CD4-positive, alpha-beta T cell (primary cell): ENCODE measurements at regions of chr12 and their contacts with region 1.

Region 1: DNA sequence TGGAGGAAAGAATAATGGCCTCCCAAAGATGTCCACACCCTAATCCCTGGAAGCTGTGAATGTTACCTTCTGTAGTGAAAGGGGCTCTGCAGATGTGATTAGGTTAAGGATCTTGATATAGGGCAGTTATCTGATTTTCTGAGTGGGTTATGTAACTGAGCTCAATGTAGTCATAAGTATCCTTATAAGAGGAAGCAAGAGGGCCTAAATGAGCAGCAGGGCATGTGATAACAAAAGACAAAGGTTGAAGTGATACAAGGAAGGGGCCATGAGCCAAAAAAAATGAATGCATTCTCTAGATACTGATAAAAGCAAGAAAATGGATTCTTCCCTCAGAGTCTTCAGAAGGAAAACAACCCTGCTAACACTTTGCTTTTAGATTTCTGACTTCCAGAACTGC is 78.8 kb downstream of the OSBPL8 start:
- DNase-seq: no peak
- ATAC-seq: no peak
- H3K4me3 ChIP-seq: no peak overlapping the region
- H3K4me3 Mint-ChIP-seq: no peak overlapping the region
- H3K27ac ChIP-seq: no peak overlapping the region
- H3K27ac Mint-ChIP-seq: peak overlapping the region; percentile 2
- H3K4me1 ChIP-seq: no peaks in the 10 kb centered on the region
- H3K4me1 Mint-ChIP-seq: peaks cover 44% of the 10 kb centered on the region
- H3K27me3 ChIP-seq: no peaks in the 10 kb centered on the region
- H3K27me3 Mint-ChIP-seq: no peaks in the 10 kb centered on the region
- CTCF ChIP-seq: no peak

Region 2: DNA sequence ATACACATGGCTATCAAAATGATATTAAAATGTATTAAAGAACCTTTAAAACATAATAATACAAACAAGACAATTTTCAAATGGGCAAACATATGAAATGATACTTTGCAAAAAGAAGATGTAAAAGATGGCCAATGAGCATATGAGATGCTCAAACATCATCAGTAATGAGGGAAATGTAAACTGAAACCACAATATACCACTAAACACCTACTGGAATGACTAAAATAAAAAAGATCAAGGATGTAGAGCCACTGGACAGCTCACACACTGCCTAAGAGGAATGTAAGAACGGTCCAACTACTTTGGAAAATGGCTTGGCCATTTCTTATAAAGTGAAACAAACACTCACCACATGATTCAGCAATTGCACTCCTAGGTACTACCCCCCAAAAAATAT is 35.3 kb before region 1 on chr12:
- CTCF ChIA-PET with region 1: no interaction called
- POLR2A ChIA-PET with region 1: no interaction called
- intact Hi-C with region 1: no loop called
- DNase-seq: no peak
- ATAC-seq: no peak
- H3K4me3 ChIP-seq: no peak overlapping the region
- H3K4me3 Mint-ChIP-seq: no peak overlapping the region
- H3K27ac ChIP-seq: no peak overlapping the region
- H3K27ac Mint-ChIP-seq: no peak overlapping the region
- H3K4me1 ChIP-seq: peaks cover 4% of the 10 kb centered on the region
- H3K4me1 Mint-ChIP-seq: peaks cover 52% of the 10 kb centered on the region
- H3K27me3 ChIP-seq: no peaks in the 10 kb centered on the region
- H3K27me3 Mint-ChIP-seq: no peaks in the 10 kb centered on the region
- CTCF ChIP-seq: no peak

Region 3: DNA sequence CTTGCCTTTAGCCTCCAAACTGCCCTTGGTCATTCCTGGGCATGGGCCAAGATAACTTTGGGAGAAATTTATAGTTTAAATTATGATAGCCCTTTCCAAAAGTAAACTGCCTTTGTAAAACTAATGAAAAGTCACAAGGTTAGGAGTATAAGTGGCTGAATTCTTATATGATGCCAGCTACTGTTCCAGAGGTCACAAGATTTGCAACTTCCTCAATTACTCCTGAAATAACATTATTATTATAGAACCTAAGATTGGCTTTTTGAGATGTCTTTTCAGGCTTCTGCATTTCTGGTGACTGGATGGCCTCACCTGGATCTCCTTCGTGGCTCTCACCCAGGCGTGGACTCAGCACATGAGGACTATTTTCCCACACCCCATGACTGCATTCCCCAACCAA is 23.8 kb after region 1 on chr12:
- CTCF ChIA-PET with region 1: no interaction called
- POLR2A ChIA-PET with region 1: no interaction called
- intact Hi-C with region 1: no loop called
- DNase-seq: no peak
- ATAC-seq: no peak
- H3K4me3 ChIP-seq: no peak overlapping the region
- H3K4me3 Mint-ChIP-seq: no peak overlapping the region
- H3K27ac ChIP-seq: no peak overlapping the region
- H3K27ac Mint-ChIP-seq: no peak overlapping the region
- H3K4me1 ChIP-seq: peaks cover 4% of the 10 kb centered on the region
- H3K4me1 Mint-ChIP-seq: peaks cover 64% of the 10 kb centered on the region
- H3K27me3 ChIP-seq: no peaks in the 10 kb centered on the region
- H3K27me3 Mint-ChIP-seq: no peaks in the 10 kb centered on the region
- CTCF ChIP-seq: no peak

Region 4: DNA sequence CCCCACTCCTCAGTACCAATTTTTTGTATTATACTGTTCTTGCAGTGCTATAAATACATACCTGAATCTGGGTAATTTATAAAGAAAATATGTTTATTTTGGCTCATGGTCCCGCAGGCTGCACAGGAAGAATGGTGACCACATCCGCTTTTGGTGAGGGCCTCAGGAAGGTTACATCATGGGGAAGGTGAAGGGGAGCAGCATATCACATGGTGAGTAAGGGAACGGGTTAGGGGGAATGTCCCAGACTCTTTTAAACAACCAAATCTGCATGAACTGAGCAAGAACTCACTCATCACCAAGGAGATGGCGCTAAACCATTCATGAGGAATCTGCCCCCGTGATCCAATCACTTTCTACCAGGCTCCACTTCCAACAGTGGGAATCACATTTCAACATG is 38.7 kb after region 1 on chr12:
- CTCF ChIA-PET with region 1: no interaction called
- POLR2A ChIA-PET with region 1: no interaction called
- intact Hi-C with region 1: loop called in 1 of 2 experiments (anchors 5 kb)
- DNase-seq: peak in 3 of 14 experiments; percentile 26 to 43 (median 31)
- ATAC-seq: peak; percentile 19
- H3K4me3 ChIP-seq: no peak overlapping the region
- H3K4me3 Mint-ChIP-seq: no peak overlapping the region
- H3K27ac ChIP-seq: no peak overlapping the region
- H3K27ac Mint-ChIP-seq: peak overlapping the region; percentile 55
- H3K4me1 ChIP-seq: peaks cover 8% of the 10 kb centered on the region
- H3K4me1 Mint-ChIP-seq: peaks cover 87% of the 10 kb centered on the region
- H3K27me3 ChIP-seq: no peaks in the 10 kb centered on the region
- H3K27me3 Mint-ChIP-seq: no peaks in the 10 kb centered on the region
- CTCF ChIP-seq: no peak

Region 5: GRCh38 chr12:76533331-76533730 is 52.5 kb after region 1 on chr12:
- CTCF ChIA-PET with region 1: no interaction called
- POLR2A ChIA-PET with region 1: no interaction called
- intact Hi-C with region 1: no loop called
- DNase-seq: no peak
- ATAC-seq: no peak
- H3K4me3 ChIP-seq: no peak overlapping the region
- H3K4me3 Mint-ChIP-seq: no peak overlapping the region
- H3K27ac ChIP-seq: no peak overlapping the region
- H3K27ac Mint-ChIP-seq: no peak overlapping the region
- H3K4me1 ChIP-seq: no peaks in the 10 kb centered on the region
- H3K4me1 Mint-ChIP-seq: peaks cover 75% of the 10 kb centered on the region
- H3K27me3 ChIP-seq: no peaks in the 10 kb centered on the region
- H3K27me3 Mint-ChIP-seq: no peaks in the 10 kb centered on the region
- CTCF ChIP-seq: no peak

Region 6: GRCh38 chr12:76848132-76848531 is 367.3 kb after region 1 on chr12:
- CTCF ChIA-PET with region 1: no interaction called
- POLR2A ChIA-PET with region 1: no interaction called
- intact Hi-C with region 1: no loop called
- DNase-seq: no peak
- ATAC-seq: no peak
- H3K4me3 ChIP-seq: no peak overlapping the region
- H3K4me3 Mint-ChIP-seq: no peak overlapping the region
- H3K27ac ChIP-seq: no peak overlapping the region
- H3K27ac Mint-ChIP-seq: no peak overlapping the region
- H3K4me1 ChIP-seq: no peaks in the 10 kb centered on the region
- H3K4me1 Mint-ChIP-seq: no peaks in the 10 kb centered on the region
- H3K27me3 ChIP-seq: no peaks in the 10 kb centered on the region
- H3K27me3 Mint-ChIP-seq: no peaks in the 10 kb centered on the region
- CTCF ChIP-seq: no peak